HepG2 (cell line): ENCODE measurements at regions of chr6 and their contacts with region 1.

Region 1: DNA sequence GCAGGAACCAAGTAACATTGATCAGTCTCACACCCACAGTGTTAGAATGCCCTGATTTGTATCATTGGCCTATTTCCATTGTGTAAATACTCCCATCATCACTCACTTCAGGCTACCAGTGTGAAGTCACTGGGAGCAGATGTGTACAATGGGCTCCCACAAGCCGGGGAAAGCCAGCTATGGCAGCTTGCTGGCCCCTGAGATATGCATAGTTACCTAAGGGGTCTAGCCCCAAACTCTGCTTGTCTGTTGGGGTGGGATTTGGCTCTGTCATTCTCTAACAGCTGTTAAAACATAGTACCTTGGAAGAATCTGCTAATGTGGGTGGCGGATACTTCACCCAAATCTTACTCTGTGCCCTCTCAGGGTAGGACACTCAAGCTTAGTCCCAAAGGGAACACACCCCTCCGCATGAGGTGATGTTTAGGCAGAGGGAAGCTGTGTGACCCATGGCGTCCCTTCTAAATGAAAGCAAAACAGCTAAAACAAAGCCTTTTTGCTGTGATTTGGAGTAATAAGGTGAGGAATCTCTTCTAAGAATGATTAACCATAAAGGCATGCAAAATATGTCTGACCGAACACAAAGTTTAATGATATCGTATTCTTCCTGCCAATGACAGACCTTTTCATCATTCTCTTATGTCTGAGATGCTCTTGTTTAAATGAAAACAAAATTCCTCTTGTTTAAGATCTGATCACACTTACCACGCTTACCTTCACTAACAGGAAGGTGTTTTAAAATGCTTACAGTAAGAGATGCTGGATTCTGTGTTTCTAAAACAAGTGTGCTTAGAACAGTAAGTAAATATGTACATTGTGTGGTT is 45.9 kb upstream of the PXDC1 start:
- DNase-seq: peak; percentile 89
- ATAC-seq: peak; percentile 83
- H3K4me3 ChIP-seq: peak overlapping the region; percentile 4 to 25 (median 17); a peak in 5 of 6 replicates
- H3K27ac ChIP-seq: peak overlapping the region; percentile 83
- H3K4me1 ChIP-seq: peaks cover 64% of the 10 kb centered on the region
- H3K27me3 ChIP-seq: no peaks in the 10 kb centered on the region
- CTCF ChIP-seq: no peak
- EP300 ChIP-seq: peak; percentile 57; a peak in 2 of 4 replicates
- POLR2A ChIP-seq: peak in 1 of 2 experiments; percentile 63; a peak in 1 of 4 replicates
- RAD21 ChIP-seq: peak; percentile 28

Region 2: GRCh38 chr6:3759646-3760232 is 37.7 kb before region 1 on chr6:
- CTCF ChIA-PET with region 1: no interaction called
- POLR2A ChIA-PET with region 1: interaction called, 12 read pairs
- in situ Hi-C with region 1: no loop called
- intact Hi-C with region 1: no loop called
- DNase-seq: peak; percentile 43
- ATAC-seq: peak; percentile 38; the same call in 2 of the 3 replicates
- H3K4me3 ChIP-seq: no peak overlapping the region; a peak in 1 of 6 replicates
- H3K27ac ChIP-seq: no peak overlapping the region
- H3K4me1 ChIP-seq: peaks cover 45% of the 10 kb centered on the region
- H3K27me3 ChIP-seq: peaks cover 0 to 7% of the 10 kb centered on the region in 2 experiments; a peak in 2 of 5 replicates
- CTCF ChIP-seq: no peak
- EP300 ChIP-seq: no peak
- POLR2A ChIP-seq: no peak
- RAD21 ChIP-seq: no peak

Region 3: DNA sequence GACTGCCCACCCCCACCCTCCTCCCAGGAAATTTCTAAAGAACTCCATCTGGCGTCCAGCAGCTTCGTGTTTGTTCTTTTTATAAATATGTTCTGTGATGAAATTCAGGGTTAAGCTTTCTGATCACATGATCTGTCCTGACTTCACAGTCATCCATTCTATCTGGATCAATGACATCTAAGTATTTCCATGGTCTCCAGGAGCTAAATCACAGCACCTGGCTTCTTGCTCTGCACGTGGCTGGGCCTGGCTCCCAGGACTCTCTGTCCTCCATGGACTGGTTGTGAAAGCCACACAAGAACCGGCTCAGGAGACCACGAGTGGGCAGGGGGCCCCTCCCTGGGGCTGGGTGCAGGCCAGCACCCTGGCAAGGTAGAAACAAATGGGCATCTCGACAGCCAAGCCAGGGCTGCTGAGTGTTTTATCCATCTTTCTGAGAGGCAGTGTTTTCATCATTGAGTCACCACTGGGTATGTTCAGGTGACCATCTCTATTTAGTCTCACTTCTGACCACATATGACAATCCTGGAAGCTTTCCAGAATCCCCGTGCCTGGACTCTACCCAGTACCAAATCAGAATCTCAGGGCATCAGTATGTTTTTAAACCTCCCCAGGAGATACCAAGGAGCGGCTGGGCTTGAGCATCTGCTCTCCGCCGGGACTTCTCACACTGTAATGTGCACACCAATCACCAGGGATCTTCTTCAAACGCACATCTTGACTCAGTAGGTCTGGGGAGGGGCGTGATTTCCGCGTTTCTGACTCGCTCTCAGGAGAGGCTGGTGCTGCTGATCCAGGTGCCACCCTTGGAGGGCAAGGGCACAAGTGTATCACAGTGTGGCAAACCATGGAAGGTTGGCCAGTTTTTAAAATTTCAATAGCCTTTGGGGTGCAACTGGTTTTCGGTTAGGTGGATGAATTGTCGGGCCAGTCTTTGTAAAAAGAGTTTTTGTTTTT is 14.3 kb before region 1 on chr6:
- CTCF ChIA-PET with region 1: no interaction called
- POLR2A ChIA-PET with region 1: interaction called, 67 read pairs
- in situ Hi-C with region 1: no loop called
- intact Hi-C with region 1: no loop called
- DNase-seq: no peak
- ATAC-seq: no peak
- H3K4me3 ChIP-seq: no peak overlapping the region
- H3K27ac ChIP-seq: peak overlapping the region; percentile 23
- H3K4me1 ChIP-seq: peaks cover 65% of the 10 kb centered on the region
- H3K27me3 ChIP-seq: no peaks in the 10 kb centered on the region
- CTCF ChIP-seq: no peak
- EP300 ChIP-seq: no peak
- POLR2A ChIP-seq: no peak
- RAD21 ChIP-seq: no peak

Region 4: GRCh38 chr6:3813150-3813780 is 15.8 kb after region 1 on chr6:
- CTCF ChIA-PET with region 1: no interaction called
- POLR2A ChIA-PET with region 1: interaction called, 15 read pairs
- in situ Hi-C with region 1: no loop called
- intact Hi-C with region 1: no loop called
- DNase-seq: peak; percentile 33
- ATAC-seq: peak; percentile 78
- H3K4me3 ChIP-seq: peak overlapping the region in 1 of 3 experiments; percentile 25; a peak in 1 of 6 replicates
- H3K27ac ChIP-seq: peak overlapping the region; percentile 15
- H3K4me1 ChIP-seq: peaks cover 30% of the 10 kb centered on the region
- H3K27me3 ChIP-seq: no peaks in the 10 kb centered on the region
- CTCF ChIP-seq: no peak; the same call in 1 of the 2 replicates
- EP300 ChIP-seq: no peak
- POLR2A ChIP-seq: no peak
- RAD21 ChIP-seq: no peak